Common myeloid progenitor, CD34-positive (primary cell): ENCODE measurements at regions of chr20 and their contacts with region 1.

Region 1: DNA sequence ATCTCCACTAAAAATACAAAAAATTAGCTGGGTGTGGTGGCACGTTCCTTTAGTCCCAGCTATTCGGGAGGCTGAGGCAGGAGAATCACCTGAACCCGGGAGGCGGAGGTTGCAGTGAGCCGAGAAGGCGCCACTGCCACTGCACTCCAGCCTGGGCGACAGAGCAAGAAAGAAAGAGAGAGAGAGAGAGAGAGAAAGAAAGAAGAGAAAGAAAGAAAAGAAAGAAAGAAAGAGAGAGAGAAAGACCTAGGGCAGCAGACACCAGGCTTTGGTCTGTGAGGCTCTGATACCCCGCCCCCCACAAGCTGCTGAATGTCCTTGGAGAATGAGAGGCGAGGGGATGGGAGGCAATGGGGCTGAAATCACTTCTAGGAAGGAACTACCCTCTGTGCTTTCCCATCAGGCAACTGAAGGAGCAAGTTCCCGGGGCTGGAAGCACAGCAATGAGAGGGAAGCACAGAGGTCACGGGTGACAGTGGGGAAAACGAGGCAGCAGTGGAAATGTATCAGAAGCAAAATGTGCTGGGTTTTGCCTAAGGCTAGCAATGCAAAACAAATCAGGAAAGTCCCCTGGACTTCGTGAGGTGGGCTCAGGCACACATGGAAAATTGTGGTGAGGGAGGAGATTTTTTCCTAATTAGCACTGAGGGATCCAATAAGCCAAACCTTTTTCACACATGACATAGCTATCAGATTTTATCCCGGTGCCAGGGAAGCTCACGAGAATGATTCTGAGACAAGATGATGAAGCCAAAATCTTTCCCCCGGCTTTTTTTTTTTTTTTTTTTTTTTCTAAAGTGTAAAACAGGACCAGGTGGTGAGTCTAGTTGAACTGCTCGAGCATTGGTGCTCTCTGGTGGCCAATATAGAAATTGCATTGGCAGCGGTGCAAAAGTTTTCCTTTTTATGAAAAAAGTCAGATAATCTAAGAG is 16.9 kb upstream of the ARFGEF2 start:
- DNase-seq: peak; percentile 70 to 86 (median 80)
- H3K4me3 ChIP-seq: no peak overlapping the region
- H3K27ac ChIP-seq: no peak overlapping the region
- H3K4me1 ChIP-seq: peaks cover 3 to 20% (median 9%) of the 10 kb centered on the region in 4 experiments
- H3K27me3 ChIP-seq: no peaks in the 10 kb centered on the region

Region 2: GRCh38 chr20:48892844-48893243 is 11.8 kb before region 1 on chr20:
- CTCF ChIA-PET with region 1: interaction called, 17 read pairs
- POLR2A ChIA-PET with region 1: no interaction called
- DNase-seq: no peak
- H3K4me3 ChIP-seq: no peak overlapping the region
- H3K27ac ChIP-seq: no peak overlapping the region
- H3K4me1 ChIP-seq: peaks cover 0 to 7% (median 0%) of the 10 kb centered on the region in 4 experiments
- H3K27me3 ChIP-seq: no peaks in the 10 kb centered on the region

Region 3: GRCh38 chr20:48945851-48946514 is 41.4 kb after region 1 on chr20:
- CTCF ChIA-PET with region 1: interaction called, 11 read pairs
- POLR2A ChIA-PET with region 1: no interaction called
- DNase-seq: no peak
- H3K4me3 ChIP-seq: no peak overlapping the region
- H3K27ac ChIP-seq: no peak overlapping the region
- H3K4me1 ChIP-seq: peaks cover 0 to 9% (median 4%) of the 10 kb centered on the region in 4 experiments
- H3K27me3 ChIP-seq: no peaks in the 10 kb centered on the region

Region 4: GRCh38 chr20:48986899-48987298 is 82.3 kb after region 1 on chr20:
- CTCF ChIA-PET with region 1: no interaction called
- POLR2A ChIA-PET with region 1: no interaction called
- DNase-seq: peak in 1 of 3 donors; percentile 4
- H3K4me3 ChIP-seq: no peak overlapping the region
- H3K27ac ChIP-seq: no peak overlapping the region
- H3K4me1 ChIP-seq: peaks cover 0 to 6% (median 2%) of the 10 kb centered on the region in 4 experiments
- H3K27me3 ChIP-seq: no peaks in the 10 kb centered on the region